HEK293 (cell line): ENCODE measurements at regions of chr22 and their contacts with region 1.

Region 1: DNA sequence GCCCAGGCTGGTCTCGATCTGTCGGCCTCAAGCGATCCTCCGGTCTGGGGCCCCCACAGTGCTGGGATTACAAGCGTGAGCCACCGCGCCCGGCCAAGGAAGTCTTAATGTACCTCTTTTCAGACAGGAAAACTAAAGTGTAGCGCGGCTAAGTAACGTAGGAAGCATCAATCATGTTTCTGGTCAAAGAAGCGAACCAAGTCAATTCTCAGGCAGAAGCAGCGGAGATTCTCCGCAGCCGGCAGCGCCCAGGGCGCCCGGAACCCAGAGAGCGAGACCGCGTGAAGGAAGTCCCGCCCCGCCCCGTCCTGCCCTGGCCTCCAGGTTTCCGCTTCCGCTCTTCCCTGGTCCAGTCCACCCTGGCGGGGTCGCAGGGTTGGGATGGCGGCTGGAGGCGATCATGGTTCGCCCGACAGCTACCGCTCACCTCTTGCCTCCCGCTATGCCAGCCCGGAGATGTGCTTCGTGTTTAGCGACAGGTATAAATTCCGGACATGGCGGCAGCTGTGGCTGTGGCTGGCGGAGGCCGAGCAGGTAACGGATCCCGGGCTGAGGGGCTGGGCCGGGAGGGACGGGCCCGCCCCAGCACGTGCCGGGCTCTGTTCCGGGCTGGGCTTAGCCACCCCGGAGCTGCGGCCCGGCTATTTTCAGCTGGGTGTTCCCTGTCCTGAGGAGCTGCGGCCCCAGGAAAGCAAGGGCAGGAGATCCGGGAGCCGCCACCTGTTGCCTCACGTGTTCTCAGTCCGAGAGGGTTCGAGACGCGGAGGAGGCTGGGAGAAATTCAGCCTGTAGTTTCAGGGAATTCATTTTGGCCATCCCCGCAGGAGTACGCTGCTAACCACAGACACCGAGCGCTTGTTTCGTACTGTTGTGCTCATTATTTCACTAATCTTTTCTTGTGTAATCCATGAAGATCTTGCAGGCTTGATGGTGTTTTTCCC is at the start of gene ADSL:
- H3K4me3 ChIP-seq: peak within 1 kb of the TSS; percentile 92
- H3K27ac ChIP-seq: peak within 1 kb of the TSS; percentile 92
- H3K4me1 ChIP-seq: peaks cover 5% of the 10 kb centered on the region; the same call in 1 of the 2 replicates
- CTCF ChIP-seq: peak; percentile 57; the same call in 1 of the 2 replicates

Region 2: GRCh38 chr22:40036591-40037225 is 309.7 kb before region 1 on chr22:
- CTCF ChIA-PET with region 1: interaction called, 28 read pairs
- POLR2A ChIA-PET with region 1: interaction called, 6 read pairs
- H3K4me3 ChIP-seq: no peak overlapping the region
- H3K27ac ChIP-seq: no peak overlapping the region
- H3K4me1 ChIP-seq: peaks cover 16% of the 10 kb centered on the region
- CTCF ChIP-seq: peak; percentile 83

Region 3: GRCh38 chr22:40044102-40044869 is 302.2 kb before region 1 on chr22:
- CTCF ChIA-PET with region 1: interaction called, 28 read pairs
- POLR2A ChIA-PET with region 1: interaction called, 31 read pairs
- H3K4me3 ChIP-seq: peak overlapping the region; percentile 99
- H3K27ac ChIP-seq: peak overlapping the region; percentile 72
- H3K4me1 ChIP-seq: peaks cover 20% of the 10 kb centered on the region
- CTCF ChIP-seq: no peak

Region 4: DNA sequence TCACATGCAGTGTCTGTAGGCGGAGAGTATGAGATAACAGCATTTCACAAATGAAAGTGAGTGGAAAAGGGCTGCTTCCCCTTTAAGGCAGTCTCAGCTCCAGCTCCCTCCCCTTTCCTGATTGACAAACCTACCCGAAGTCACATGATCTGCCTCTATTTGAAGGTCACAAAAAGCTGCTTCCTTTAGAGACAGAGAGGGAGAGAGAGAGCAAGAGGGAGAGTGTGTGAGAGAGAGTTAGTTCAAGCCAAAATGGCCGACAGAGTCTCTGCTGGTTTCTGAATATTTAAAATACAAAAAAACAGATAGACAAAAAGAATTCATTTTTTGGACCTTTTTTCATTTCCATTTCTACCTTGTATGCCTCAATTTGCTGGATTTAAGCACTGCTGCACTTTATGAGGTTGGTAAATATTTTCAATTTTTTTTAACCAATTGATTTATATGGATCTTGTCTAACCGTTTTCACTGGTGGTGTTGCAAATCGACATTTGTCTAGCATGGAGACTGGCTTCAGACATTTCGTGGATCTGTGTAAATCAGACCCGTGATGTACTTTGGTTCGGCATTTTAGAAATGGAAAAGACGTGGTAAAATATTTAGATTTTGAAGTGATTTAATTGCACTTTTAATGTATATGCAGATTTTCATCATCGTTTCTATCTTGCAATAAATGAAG is 168.6 kb before region 1 on chr22 and contains the start of gene TNRC6B:
- CTCF ChIA-PET with region 1: interaction called, 7 read pairs
- POLR2A ChIA-PET with region 1: interaction called, 20 read pairs
- H3K4me3 ChIP-seq: peak within 1 kb of the TSS; percentile 76
- H3K27ac ChIP-seq: peak within 1 kb of the TSS; percentile 73
- H3K4me1 ChIP-seq: peaks cover 23% of the 10 kb centered on the region
- CTCF ChIP-seq: no peak

Region 5: GRCh38 chr22:40193429-40194421 is 152.7 kb before region 1 on chr22:
- CTCF ChIA-PET with region 1: interaction called, 15 read pairs
- POLR2A ChIA-PET with region 1: no interaction called
- H3K4me3 ChIP-seq: no peak overlapping the region
- H3K27ac ChIP-seq: no peak overlapping the region
- H3K4me1 ChIP-seq: peaks cover 9% of the 10 kb centered on the region
- CTCF ChIP-seq: no peak; the same call in 1 of the 2 replicates

Region 6: DNA sequence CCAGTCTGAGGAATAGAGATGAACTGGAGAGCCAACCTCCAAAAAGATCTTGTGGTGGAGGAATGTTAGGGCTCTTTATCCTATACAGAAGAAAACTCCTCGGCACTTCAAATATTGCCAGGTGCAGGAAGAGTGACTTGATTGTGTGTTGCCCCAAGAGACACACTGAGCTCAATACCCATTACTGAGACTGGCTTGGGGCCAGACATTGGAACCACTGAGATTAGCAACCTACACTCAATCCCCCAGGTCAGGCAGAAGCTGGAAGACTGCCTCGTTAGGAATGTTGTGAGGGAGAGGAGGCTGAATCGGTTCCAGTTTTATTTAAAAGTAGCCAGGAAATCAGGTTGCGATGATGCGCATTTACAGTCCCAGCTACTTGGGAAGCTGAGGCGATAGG is 21.6 kb after region 1 on chr22:
- CTCF ChIA-PET with region 1: interaction called, 8 read pairs
- POLR2A ChIA-PET with region 1: interaction called, 13 read pairs
- H3K4me3 ChIP-seq: no peak overlapping the region
- H3K27ac ChIP-seq: no peak overlapping the region
- H3K4me1 ChIP-seq: peaks cover 8% of the 10 kb centered on the region
- CTCF ChIP-seq: no peak

Region 7: DNA sequence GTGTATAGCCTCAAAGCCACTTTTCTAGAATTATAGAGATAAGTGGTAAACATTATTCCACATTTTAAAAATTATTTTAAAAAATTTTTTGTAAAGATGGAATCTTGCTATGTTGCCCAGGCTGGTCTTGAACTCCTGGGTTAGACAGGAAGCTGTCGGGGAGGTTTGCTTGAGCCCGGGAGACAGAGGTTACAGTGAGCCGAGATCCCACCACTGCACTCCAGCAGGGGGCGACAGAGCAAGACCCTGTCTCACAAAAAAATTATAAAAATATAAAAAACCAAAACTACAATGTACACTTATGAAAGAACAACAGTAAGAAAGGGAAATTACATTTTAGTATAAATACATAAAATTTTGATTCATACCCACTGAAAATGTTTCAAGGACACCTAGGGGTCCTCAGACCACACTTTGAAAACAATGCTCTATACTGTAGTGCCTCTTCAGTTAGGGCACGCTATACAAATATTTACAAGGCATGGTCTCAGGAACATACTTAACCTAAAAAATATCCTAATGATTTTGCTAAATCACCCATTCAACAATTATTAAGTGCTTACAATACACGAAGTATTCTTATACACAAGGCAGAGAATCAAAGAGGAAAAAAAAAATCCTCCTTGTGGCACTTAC is 178.9 kb after region 1 on chr22:
- CTCF ChIA-PET with region 1: no interaction called
- POLR2A ChIA-PET with region 1: no interaction called
- H3K4me3 ChIP-seq: no peak overlapping the region
- H3K27ac ChIP-seq: no peak overlapping the region
- H3K4me1 ChIP-seq: peaks cover 7% of the 10 kb centered on the region; the same call in 1 of the 2 replicates
- CTCF ChIP-seq: no peak